ENCODE measurements at regions of chr7 and their contacts with region 1.

Region 1: GRCh38 chr7:98434095-98434494 is 33.2 kb upstream of the BAIAP2L1 start:
- DNase-seq: no peak
- ATAC-seq: no peak
- H3K4me3 ChIP-seq: no peak overlapping the region
- H3K27ac ChIP-seq: no peak overlapping the region
- H3K4me1 ChIP-seq: no peaks in the 10 kb centered on the region
- H3K27me3 ChIP-seq: no peaks in the 10 kb centered on the region
- CTCF ChIP-seq: no peak
- POLR2A ChIP-seq: no peak

Region 2: GRCh38 chr7:98266840-98267239 is 167.3 kb before region 1 on chr7:
- intact Hi-C with region 1: no loop called
- DNase-seq: no peak
- ATAC-seq: peak; percentile 79 to 89 (median 84)
- H3K4me3 ChIP-seq: no peak overlapping the region
- H3K27ac ChIP-seq: no peak overlapping the region
- H3K4me1 ChIP-seq: no peaks in the 10 kb centered on the region
- H3K27me3 ChIP-seq: no peaks in the 10 kb centered on the region
- CTCF ChIP-seq: peak; percentile 36 to 49 (median 42)
- POLR2A ChIP-seq: no peak

Region 3: DNA sequence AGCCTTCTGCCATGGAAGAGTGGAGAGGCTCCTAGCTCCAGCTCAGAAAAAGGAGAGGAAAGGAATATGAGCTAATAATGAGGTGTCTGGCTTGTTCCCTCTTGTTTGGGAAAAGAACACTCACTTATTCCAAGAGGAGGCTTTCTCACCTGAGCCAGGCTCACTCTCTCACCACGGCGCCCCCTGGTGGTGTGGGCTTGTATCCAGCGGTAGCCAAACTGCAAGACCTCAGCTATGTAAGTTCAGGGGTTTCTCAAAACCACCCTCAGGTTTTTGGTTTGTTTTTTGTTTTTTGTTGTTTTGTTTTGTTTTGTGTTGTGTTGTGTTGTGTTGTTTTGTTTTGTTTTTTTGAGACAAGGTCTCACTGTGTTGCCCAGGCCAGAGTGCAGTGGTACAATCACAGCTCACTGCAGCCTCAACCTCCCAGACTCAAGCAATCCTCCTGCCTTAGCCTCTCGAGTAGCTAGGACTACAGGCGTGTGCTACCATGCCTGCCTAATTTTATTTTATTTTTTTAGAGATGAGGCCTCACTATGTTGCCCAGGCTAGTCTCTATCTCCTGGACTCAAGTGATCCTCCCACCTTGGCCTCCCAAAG is 311.7 kb after region 1 on chr7:
- intact Hi-C with region 1: loop called (anchors 5 to 10 kb)
- DNase-seq: peak; percentile 75 to 82 (median 81)
- ATAC-seq: peak; percentile 84 to 91 (median 86)
- H3K4me3 ChIP-seq: no peak overlapping the region
- H3K27ac ChIP-seq: no peak overlapping the region
- H3K4me1 ChIP-seq: no peaks in the 10 kb centered on the region
- H3K27me3 ChIP-seq: no peaks in the 10 kb centered on the region
- CTCF ChIP-seq: peak; percentile 75 to 91 (median 87)
- POLR2A ChIP-seq: no peak

Region 4: DNA sequence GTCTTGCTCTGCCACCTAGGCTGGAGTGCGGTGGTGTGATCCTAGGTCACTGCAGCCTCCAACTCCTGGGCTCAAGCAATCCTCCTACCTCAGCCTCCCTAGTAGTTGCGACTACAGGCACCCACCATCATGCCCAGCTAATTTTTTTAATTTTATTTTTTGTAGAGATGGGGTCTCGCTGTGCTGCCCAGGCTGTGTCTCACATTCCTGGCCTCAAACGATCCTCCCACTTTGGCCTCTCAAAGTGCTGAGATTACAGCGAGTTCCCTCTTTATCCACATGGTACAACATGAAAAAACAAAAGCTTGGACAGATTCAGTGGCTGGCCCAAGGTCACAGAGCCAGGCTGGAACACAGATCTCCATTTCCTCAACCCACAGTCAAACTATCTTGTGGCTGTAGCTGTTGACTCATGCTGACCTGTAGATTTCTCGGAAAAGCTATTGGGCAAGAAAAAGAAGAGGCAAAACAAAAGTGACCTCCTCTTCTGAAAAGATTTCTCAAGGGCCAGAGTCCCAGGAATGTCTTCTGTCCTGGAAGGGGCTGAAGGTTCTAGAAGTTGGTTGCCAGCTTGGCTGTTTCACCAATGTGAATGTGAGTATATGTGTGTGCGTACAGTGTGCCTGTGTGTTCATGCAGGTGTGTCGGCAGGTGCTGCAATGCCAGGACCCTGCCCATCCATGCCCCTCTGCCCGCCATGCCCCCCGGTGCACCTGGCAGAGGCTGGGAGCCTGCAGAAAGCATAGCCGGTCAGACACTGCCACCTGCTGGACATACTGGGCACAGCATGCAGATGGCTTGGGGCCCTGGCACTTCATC is 407.3 kb after region 1 on chr7:
- intact Hi-C with region 1: loop called in 1 of 2 experiments (anchors 5 kb)
- DNase-seq: peak; percentile 60 to 76 (median 73)
- ATAC-seq: peak; percentile 89 to 94 (median 90)
- H3K4me3 ChIP-seq: no peak overlapping the region
- H3K27ac ChIP-seq: peak overlapping the region in 1 of 3 donors; percentile 48
- H3K4me1 ChIP-seq: peaks cover 0 to 6% (median under 1%) of the 10 kb centered on the region in 4 donors
- H3K27me3 ChIP-seq: no peaks in the 10 kb centered on the region
- CTCF ChIP-seq: peak; percentile 91 to 98 (median 96)
- POLR2A ChIP-seq: no peak

Measured in right lobe of liver (tissue), 6 donors.